Common myeloid progenitor, CD34-positive (primary cell): ENCODE measurements at regions of chr1 and their contacts with region 1.

Region 1: GRCh38 chr1:22039594-22040285 is 12.8 kb upstream of the CDC42 start:
- DNase-seq: peak; percentile 95 to 99 (median 98)
- H3K4me3 ChIP-seq: peak overlapping the region in 6 of 7 experiments; percentile 4 to 69 (median 47)
- H3K27ac ChIP-seq: peak overlapping the region; percentile 77 to 93
- H3K4me1 ChIP-seq: peaks cover 20 to 59% (median 41%) of the 10 kb centered on the region in 4 experiments
- H3K27me3 ChIP-seq: no peaks in the 10 kb centered on the region

Region 2: GRCh38 chr1:21871974-21872373 is 167.8 kb before region 1 on chr1:
- CTCF ChIA-PET with region 1: no interaction called
- POLR2A ChIA-PET with region 1: no interaction called
- DNase-seq: no peak
- H3K4me3 ChIP-seq: no peak overlapping the region
- H3K27ac ChIP-seq: no peak overlapping the region
- H3K4me1 ChIP-seq: no peaks in the 10 kb centered on the region
- H3K27me3 ChIP-seq: no peaks in the 10 kb centered on the region

Region 3: DNA sequence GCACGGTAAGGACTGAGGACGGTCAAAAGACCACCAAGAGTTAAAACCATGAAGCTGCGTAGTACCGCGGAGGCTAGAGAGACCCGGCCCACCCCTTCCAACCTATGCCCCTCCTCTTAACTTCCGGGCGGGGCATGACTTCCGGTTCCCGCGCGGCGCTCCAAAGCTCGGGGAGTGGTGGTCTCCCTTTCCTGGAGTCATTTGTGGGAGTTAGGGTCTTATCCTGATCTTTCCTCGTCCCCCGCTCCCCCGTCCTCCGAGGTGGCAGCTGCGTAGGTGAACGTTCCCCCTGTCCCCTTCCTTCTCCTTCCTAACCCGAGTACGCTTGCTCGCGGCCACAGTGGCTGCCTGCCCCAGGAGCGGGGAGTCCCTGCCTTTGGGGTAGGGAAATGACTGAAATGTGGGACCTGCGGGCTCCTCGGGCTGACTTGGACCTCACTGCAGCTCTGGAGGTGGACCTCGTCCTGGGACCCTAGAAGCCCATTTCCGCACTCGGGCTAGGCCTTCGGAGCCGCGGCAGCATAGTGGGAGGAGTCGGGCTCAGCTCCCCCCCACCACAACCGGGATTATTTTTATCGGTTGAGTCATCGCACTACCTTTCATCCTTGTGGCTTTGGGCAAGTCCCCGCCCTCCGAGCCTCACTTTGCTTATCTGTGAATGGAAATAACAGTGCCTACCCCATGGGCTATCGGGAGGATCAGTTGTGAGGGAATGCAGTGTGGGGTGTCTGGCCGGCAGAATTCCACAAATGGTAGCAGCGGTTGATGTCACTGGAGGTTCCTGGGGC is 14.2 kb before region 1 on chr1:
- CTCF ChIA-PET with region 1: interaction called, 20 read pairs
- POLR2A ChIA-PET with region 1: interaction called, 16 read pairs
- DNase-seq: peak; percentile 88 to 96 (median 96)
- H3K4me3 ChIP-seq: peak overlapping the region; percentile 80 to 100 (median 96)
- H3K27ac ChIP-seq: peak overlapping the region; percentile 94 to 98
- H3K4me1 ChIP-seq: peaks cover 0 to 44% (median 26%) of the 10 kb centered on the region in 4 experiments
- H3K27me3 ChIP-seq: no peaks in the 10 kb centered on the region

Region 4: DNA sequence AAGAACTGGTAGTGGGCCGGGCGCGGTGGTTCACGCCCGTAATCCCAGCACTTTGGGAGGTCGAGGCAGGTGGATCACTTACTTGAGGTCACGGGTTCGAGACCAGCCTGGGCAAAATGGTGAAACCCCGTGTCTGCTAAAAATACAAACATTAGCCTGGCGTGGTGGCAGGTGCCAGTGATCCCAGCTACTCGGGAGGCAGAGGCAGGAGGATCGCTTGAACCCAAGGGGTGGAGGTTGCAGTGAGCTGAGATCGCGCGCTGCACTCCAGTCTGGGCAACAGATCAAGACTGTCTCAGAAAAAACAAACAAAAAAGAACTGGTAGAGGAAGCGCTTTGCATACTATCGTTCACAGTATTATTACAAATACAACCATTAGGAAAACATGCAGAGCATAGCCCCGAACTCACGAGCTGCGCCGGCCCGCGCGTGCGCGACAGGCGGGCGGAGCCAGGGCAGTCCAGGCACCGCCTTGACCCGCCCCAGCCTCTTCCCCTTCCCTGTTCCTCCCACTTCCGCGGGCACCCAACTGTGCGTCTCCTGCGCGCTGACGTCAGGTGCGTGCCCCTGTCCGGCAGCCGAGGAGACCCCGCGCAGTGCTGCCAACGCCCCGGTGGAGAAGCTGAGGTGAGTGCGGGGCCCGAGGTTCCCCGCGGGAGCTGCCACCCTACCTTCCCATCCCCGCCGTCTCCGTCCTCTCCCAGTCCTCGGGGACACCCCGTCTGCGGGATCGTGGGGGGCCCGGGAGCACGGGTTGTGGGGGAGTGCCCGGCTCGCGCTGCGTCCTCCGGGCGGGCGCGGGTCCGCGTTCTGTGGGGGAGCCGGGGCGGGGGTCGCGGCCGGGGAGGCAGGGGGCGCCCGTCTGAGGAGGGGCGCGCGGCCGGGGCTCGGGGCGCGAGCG is 12.6 kb after region 1 on chr1 and contains the start of gene CDC42:
- CTCF ChIA-PET with region 1: interaction called, 10 read pairs
- POLR2A ChIA-PET with region 1: interaction called, 13 read pairs
- DNase-seq: peak; percentile 97 to 98 (median 98)
- H3K4me3 ChIP-seq: peak within 1 kb of the TSS; percentile 78 to 97 (median 88)
- H3K27ac ChIP-seq: peak within 1 kb of the TSS; percentile 94 to 97
- H3K4me1 ChIP-seq: peaks cover 16 to 43% (median 33%) of the 10 kb centered on the region in 4 experiments
- H3K27me3 ChIP-seq: no peaks in the 10 kb centered on the region

Region 5: DNA sequence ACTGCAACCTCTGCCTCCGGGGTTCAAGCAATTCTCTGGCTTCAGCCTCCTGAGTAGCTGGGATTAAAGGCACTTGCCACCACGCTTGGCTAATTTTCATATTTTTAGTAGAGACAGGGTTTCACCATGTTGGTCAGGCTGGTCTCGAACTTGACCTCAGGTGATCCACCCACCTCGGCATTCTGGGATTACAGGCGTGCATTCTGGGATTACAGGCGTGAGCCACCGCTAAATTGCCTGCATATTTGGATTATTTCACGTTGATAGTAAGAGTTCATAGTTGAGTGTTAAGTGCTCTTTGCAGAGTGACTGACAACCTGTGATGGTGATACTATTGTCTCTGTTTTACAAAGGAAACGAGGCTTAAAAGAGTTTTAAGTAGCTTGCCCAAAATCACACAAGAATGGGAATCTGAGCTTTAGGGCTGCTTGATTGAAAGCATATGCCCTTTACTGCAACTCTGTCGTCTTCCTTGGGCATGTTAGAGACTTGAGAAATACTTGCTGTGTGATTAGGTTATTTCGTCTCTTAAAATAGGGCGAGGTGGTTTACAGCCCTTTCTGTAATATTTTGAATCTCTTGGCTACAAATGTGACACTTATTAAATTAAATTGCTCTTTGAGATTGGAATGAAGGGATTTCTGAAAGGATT is 25.1 kb after region 1 on chr1:
- CTCF ChIA-PET with region 1: no interaction called
- POLR2A ChIA-PET with region 1: no interaction called
- DNase-seq: no peak
- H3K4me3 ChIP-seq: no peak overlapping the region
- H3K27ac ChIP-seq: no peak overlapping the region
- H3K4me1 ChIP-seq: peaks cover 0 to 16% (median 1%) of the 10 kb centered on the region in 4 experiments
- H3K27me3 ChIP-seq: no peaks in the 10 kb centered on the region

Region 6: DNA sequence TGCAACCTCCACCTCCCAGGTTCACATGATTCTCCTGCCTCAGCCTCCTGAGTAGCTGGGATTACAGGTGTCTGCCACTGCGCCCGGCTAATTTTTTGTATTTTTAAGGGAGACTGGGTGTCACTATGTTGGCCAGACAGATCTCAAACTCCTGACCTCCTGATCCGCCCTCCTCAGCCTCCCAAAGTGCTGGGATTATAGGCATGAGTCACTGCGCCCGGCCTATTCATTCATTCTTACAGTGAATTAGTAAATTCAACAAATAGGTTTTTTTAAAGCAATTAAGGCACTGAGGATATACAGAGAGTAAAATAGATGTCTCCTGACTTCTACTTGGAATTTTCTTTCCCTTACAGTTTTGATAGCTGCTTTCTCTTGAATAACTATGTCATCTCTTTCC is 56.3 kb after region 1 on chr1:
- CTCF ChIA-PET with region 1: no interaction called
- POLR2A ChIA-PET with region 1: no interaction called
- DNase-seq: no peak
- H3K4me3 ChIP-seq: no peak overlapping the region
- H3K27ac ChIP-seq: no peak overlapping the region
- H3K4me1 ChIP-seq: peaks cover 6 to 18% (median 11%) of the 10 kb centered on the region in 4 experiments
- H3K27me3 ChIP-seq: no peaks in the 10 kb centered on the region